CD8-positive, alpha-beta T cell (primary cell): ENCODE measurements at regions of chr2 and their contacts with region 1.

Region 1: DNA sequence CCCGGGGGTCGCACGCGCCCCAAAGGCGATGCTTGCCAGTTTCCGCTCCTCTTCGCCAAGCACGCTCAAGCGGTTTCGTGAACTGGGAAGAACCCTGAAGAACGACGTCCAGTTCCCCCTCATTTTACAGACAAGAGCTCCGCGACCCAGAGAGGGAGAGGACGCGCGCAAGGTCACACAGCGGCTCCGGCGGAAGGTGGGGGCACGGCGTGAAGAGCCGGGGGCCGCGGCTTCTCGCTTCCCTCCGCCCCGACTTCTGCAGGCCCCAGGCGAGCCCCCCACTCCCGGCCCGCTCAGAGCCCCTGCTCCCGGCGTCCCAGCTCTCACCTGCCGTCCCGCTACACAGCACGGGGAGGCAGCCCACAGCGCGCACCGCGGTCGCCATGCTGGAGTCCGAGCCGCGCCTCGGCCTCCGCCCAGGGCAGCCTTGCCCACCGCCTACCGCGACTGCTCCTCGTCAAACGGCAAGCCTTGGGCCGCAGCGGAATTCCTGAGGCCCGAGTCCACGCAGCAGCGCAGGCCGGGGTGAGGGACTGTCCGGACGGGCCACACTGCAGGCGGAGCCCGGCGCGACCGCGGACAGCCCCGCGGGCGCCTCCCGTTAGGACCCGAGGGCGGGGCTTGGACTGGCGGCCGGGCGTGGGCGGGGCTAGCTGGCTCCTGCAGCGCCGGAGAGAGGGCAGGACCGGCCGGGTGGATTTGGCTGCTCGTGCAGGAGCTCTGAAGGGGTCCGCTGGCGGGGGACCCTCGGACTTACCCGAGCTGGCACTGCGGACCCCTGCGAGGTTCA is at the start of gene MRPS5:
- DNase-seq: peak; percentile 75 to 93 (median 85)
- ATAC-seq: peak; percentile 94
- H3K4me3 ChIP-seq: peak within 1 kb of the TSS; percentile 87 to 89
- H3K4me3 Mint-ChIP-seq: peak within 1 kb of the TSS; percentile 96
- H3K27ac ChIP-seq: peak within 1 kb of the TSS; percentile 81 to 85
- H3K27ac Mint-ChIP-seq: peak within 1 kb of the TSS; percentile 96
- H3K4me1 ChIP-seq: peaks cover 29% of the 10 kb centered on the region
- H3K4me1 Mint-ChIP-seq: peaks cover 44% of the 10 kb centered on the region
- H3K27me3 ChIP-seq: no peaks in the 10 kb centered on the region
- H3K27me3 Mint-ChIP-seq: no peaks in the 10 kb centered on the region
- CTCF ChIP-seq: no peak
- total RNA-seq, gene MRPS5: 20.0 to 21.3 TPM

Region 2: DNA sequence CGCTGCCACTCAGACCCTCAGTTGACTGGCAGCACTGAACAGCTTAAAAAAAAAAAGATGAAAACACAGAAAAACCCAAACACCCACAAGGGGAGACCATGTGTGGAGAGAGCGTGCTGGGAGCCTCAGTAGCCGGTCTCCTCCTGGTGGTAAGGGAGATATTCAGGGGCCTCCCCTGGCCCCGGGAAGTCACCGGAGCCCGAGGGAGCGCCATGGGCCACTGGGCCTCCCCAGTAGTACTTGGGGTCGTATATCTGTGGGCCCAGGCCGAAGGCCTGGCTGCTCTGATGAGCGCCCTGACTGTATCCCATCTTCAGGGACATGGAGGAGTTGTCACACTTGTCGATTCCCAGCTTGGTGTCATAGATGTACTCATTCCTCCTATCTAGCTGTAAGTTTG is 396.1 kb before region 1 on chr2:
- CTCF ChIA-PET with region 1: no interaction called
- POLR2A ChIA-PET with region 1: no interaction called
- intact Hi-C with region 1: no loop called
- DNase-seq: no peak
- ATAC-seq: no peak
- H3K4me3 ChIP-seq: no peak overlapping the region
- H3K4me3 Mint-ChIP-seq: no peak overlapping the region
- H3K27ac ChIP-seq: no peak overlapping the region
- H3K27ac Mint-ChIP-seq: no peak overlapping the region
- H3K4me1 ChIP-seq: no peaks in the 10 kb centered on the region
- H3K4me1 Mint-ChIP-seq: no peaks in the 10 kb centered on the region
- H3K27me3 ChIP-seq: no peaks in the 10 kb centered on the region
- H3K27me3 Mint-ChIP-seq: peaks cover 3% of the 10 kb centered on the region
- CTCF ChIP-seq: no peak

Region 3: DNA sequence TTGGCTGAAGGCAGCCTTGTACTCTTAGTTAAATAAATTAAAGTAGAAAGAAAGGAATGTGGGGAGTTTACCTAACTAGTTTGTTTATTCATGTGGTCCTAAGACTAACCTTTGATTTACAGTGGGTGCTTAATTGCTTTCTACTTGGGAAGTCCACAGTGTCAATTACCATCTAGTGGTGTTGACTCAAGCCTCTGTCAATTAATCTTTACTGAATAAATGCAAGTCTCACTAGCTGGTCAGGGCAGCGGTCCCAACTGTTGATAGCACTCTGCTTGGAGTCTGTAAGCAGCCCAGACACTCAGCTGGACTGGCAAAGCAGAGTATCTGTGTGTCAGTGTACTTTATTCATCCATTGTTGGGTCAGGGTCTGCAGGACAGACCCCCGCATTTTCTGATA is 22.2 kb after region 1 on chr2:
- CTCF ChIA-PET with region 1: no interaction called
- POLR2A ChIA-PET with region 1: no interaction called
- intact Hi-C with region 1: no loop called
- DNase-seq: no peak
- ATAC-seq: no peak
- H3K4me3 ChIP-seq: no peak overlapping the region
- H3K4me3 Mint-ChIP-seq: no peak overlapping the region
- H3K27ac ChIP-seq: no peak overlapping the region
- H3K27ac Mint-ChIP-seq: no peak overlapping the region
- H3K4me1 ChIP-seq: no peaks in the 10 kb centered on the region
- H3K4me1 Mint-ChIP-seq: no peaks in the 10 kb centered on the region
- H3K27me3 ChIP-seq: no peaks in the 10 kb centered on the region
- H3K27me3 Mint-ChIP-seq: no peaks in the 10 kb centered on the region
- CTCF ChIP-seq: no peak

Region 4: DNA sequence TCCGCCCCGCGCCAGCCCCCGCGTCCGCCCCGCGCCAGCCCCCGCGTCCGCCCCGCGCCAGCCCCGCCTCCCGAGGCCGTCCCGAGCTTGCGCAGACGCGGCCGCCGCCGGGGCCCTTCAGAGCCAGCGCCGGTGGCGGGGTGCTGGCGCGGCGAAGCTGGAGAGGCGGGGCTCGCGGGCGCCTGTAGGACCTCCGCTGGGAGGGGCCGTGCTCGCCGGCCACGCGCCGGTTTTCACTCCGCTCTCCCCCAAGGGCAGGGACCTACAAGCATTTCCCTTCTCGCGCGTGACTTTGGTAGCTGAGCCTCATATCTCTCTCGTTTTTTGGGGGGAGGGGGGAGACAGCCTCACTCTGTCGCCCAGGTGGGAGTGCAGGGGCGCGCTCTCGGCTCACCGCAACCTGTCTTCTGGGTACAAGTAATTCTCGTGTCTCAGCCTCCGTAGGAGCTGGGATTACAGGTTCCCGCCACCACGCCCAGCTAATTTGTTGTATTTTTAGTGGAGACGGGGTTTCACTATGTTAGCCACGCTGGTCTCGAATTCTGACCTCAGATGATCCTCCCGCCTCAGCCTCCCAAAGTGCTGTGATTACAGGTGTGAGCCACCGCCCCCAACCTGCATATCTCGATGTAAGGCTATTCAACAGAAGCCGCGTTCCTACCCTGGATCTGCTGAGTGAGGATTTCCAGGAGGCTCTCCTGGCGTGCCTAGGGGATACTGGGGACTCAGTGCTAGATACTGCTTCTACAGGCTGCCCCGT is 38.3 kb after region 1 on chr2 and contains the start of gene ZNF514:
- CTCF ChIA-PET with region 1: interaction called, 3 read pairs
- POLR2A ChIA-PET with region 1: interaction called, 41 read pairs
- intact Hi-C with region 1: loop called (anchors 1 kb)
- DNase-seq: peak; percentile 32 to 90 (median 76)
- ATAC-seq: peak; percentile 90
- H3K4me3 ChIP-seq: peak within 1 kb of the TSS; percentile 83 to 96
- H3K4me3 Mint-ChIP-seq: peak within 1 kb of the TSS; percentile 91
- H3K27ac ChIP-seq: peak within 1 kb of the TSS; percentile 61 to 70
- H3K27ac Mint-ChIP-seq: peak within 1 kb of the TSS; percentile 95
- H3K4me1 ChIP-seq: peaks cover 21% of the 10 kb centered on the region
- H3K4me1 Mint-ChIP-seq: peaks cover 25% of the 10 kb centered on the region
- H3K27me3 ChIP-seq: no peaks in the 10 kb centered on the region
- H3K27me3 Mint-ChIP-seq: no peaks in the 10 kb centered on the region
- CTCF ChIP-seq: no peak
- total RNA-seq, gene ZNF514: 9.7 to 10.2 TPM

Region 5: GRCh38 chr2:95165129-95166064 is 43.8 kb after region 1 on chr2 and contains the start of gene ZNF2:
- CTCF ChIA-PET with region 1: interaction called, 3 read pairs
- POLR2A ChIA-PET with region 1: interaction called, 41 read pairs
- intact Hi-C with region 1: loop called (anchors 1 kb)
- DNase-seq: peak; percentile 91 to 99 (median 98)
- ATAC-seq: peak; percentile 94
- H3K4me3 ChIP-seq: peak within 1 kb of the TSS; percentile 98
- H3K4me3 Mint-ChIP-seq: peak within 1 kb of the TSS; percentile 99
- H3K27ac ChIP-seq: peak within 1 kb of the TSS; percentile 90 to 96
- H3K27ac Mint-ChIP-seq: peak within 1 kb of the TSS; percentile 96
- H3K4me1 ChIP-seq: peaks cover 18% of the 10 kb centered on the region
- H3K4me1 Mint-ChIP-seq: peaks cover 41% of the 10 kb centered on the region
- H3K27me3 ChIP-seq: no peaks in the 10 kb centered on the region
- H3K27me3 Mint-ChIP-seq: no peaks in the 10 kb centered on the region
- CTCF ChIP-seq: no peak
- total RNA-seq, gene ZNF2: 0.25 to 0.27 TPM

Region 6: GRCh38 chr2:95207111-95207961 is 85.7 kb after region 1 on chr2 and contains the start of gene ZNF892:
- CTCF ChIA-PET with region 1: no interaction called
- POLR2A ChIA-PET with region 1: no interaction called
- intact Hi-C with region 1: loop called (anchors 1 kb)
- DNase-seq: peak; percentile 53 to 89 (median 79)
- ATAC-seq: peak; percentile 90
- H3K4me3 ChIP-seq: peak within 1 kb of the TSS; percentile 74 to 97
- H3K4me3 Mint-ChIP-seq: peak within 1 kb of the TSS; percentile 94
- H3K27ac ChIP-seq: peak within 1 kb of the TSS; percentile 68 to 79
- H3K27ac Mint-ChIP-seq: peak within 1 kb of the TSS; percentile 91
- H3K4me1 ChIP-seq: peaks cover 7% of the 10 kb centered on the region
- H3K4me1 Mint-ChIP-seq: peaks cover 32% of the 10 kb centered on the region
- H3K27me3 ChIP-seq: no peaks in the 10 kb centered on the region
- H3K27me3 Mint-ChIP-seq: no peaks in the 10 kb centered on the region
- CTCF ChIP-seq: no peak
- total RNA-seq, gene ZNF892: 0.71 to 0.78 TPM

Region 7: GRCh38 chr2:95402370-95403203 is 281.0 kb after region 1 on chr2 and contains the start of gene FAHD2A:
- CTCF ChIA-PET with region 1: no interaction called
- POLR2A ChIA-PET with region 1: no interaction called
- intact Hi-C with region 1: loop called in 1 of 2 experiments (anchors 5 kb)
- DNase-seq: peak; percentile 82 to 96 (median 93)
- ATAC-seq: peak; percentile 94
- H3K4me3 ChIP-seq: peak within 1 kb of the TSS; percentile 71 to 98
- H3K4me3 Mint-ChIP-seq: peak within 1 kb of the TSS; percentile 98
- H3K27ac ChIP-seq: peak within 1 kb of the TSS; percentile 61 to 75
- H3K27ac Mint-ChIP-seq: peak within 1 kb of the TSS; percentile 94
- H3K4me1 ChIP-seq: peaks cover 16% of the 10 kb centered on the region
- H3K4me1 Mint-ChIP-seq: peaks cover 27% of the 10 kb centered on the region
- H3K27me3 ChIP-seq: no peaks in the 10 kb centered on the region
- H3K27me3 Mint-ChIP-seq: no peaks in the 10 kb centered on the region
- CTCF ChIP-seq: no peak
- total RNA-seq, gene FAHD2A: 25.5 to 26.3 TPM